ENCODE measurements at regions of chr12 and their contacts with region 1.

Region 1: DNA sequence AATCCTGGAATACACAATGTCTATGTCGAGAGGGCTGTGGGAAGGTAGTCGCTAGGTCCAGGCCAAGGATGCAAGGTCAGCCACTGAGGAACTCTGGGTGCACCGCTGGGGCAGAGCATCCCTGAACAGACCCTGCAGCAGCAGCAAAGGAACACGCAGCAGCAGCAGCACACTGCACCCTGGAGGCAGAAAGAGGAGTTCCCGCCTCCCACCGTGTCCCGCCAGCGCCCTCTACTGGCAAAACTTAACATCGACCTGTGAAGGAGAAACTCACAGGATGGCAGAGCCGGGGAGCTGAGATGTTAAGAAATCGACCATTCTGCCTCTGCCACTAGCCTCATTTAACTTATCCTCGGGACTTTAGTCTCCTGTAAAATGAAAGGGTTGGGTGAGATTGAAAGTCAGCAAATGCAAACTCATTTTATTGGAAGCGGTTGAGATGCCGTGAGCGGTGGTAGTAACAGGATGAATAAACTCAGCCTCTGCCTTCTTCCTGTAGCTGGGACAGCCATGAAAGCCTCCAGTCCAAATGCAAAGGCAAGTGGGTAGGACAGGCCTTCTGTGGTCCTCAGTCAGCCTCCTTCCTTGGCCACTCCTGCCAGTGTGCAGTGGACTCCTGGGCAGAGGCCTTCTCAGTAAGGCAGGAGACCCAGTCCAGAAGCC is 45.6 kb downstream of the STAB2 start:
- DNase-seq: peak; percentile 42 to 68
- H3K4me3 ChIP-seq: no peak overlapping the region
- H3K27ac ChIP-seq: no peak overlapping the region
- H3K4me1 ChIP-seq: no peaks in the 10 kb centered on the region
- H3K27me3 ChIP-seq: no peaks in the 10 kb centered on the region
- CTCF ChIP-seq: peak; percentile 24 to 90 (median 72)
- POLR2A ChIP-seq: no peak

Region 2: GRCh38 chr12:103462675-103463074 is 170.0 kb before region 1 on chr12:
- intact Hi-C with region 1: no loop called
- DNase-seq: no peak
- H3K4me3 ChIP-seq: no peak overlapping the region
- H3K27ac ChIP-seq: no peak overlapping the region
- H3K4me1 ChIP-seq: no peaks in the 10 kb centered on the region
- H3K27me3 ChIP-seq: no peaks in the 10 kb centered on the region
- CTCF ChIP-seq: no peak
- POLR2A ChIP-seq: no peak

Region 3: DNA sequence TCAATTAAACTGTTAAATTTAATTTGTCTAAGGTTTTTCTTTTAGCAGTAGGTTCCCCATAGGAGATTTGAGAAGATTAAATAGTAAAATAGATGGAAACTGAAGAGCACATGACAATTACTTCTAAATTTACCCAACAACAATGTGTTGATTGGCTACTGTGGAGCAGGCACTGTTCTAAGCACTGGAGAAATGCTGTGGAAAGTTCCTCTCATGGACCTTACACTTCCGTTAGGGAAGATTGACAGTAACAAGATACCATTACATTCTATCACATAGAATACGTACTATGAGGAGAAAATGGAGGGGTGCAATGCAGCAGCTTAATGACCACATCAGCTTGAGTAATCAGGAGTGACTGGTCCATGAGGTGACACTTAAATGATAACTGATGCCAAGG is 53.8 kb before region 1 on chr12:
- intact Hi-C with region 1: loop called (anchors 5 kb)
- DNase-seq: no peak
- H3K4me3 ChIP-seq: no peak overlapping the region
- H3K27ac ChIP-seq: no peak overlapping the region
- H3K4me1 ChIP-seq: peaks cover 4 to 15% of the 10 kb centered on the region in 2 donors
- H3K27me3 ChIP-seq: no peaks in the 10 kb centered on the region
- CTCF ChIP-seq: no peak
- POLR2A ChIP-seq: no peak

Region 4: GRCh38 chr12:104339663-104340062 is 707.0 kb after region 1 on chr12:
- intact Hi-C with region 1: no loop called
- DNase-seq: no peak
- H3K4me3 ChIP-seq: no peak overlapping the region
- H3K27ac ChIP-seq: no peak overlapping the region
- H3K4me1 ChIP-seq: peaks cover 0 to 4% of the 10 kb centered on the region in 2 donors
- H3K27me3 ChIP-seq: no peaks in the 10 kb centered on the region
- CTCF ChIP-seq: no peak
- POLR2A ChIP-seq: no peak

Measured in thyroid gland (tissue), 4 donors.